ENCODE measurements at regions of chr12 and their contacts with region 1.

Region 1: DNA sequence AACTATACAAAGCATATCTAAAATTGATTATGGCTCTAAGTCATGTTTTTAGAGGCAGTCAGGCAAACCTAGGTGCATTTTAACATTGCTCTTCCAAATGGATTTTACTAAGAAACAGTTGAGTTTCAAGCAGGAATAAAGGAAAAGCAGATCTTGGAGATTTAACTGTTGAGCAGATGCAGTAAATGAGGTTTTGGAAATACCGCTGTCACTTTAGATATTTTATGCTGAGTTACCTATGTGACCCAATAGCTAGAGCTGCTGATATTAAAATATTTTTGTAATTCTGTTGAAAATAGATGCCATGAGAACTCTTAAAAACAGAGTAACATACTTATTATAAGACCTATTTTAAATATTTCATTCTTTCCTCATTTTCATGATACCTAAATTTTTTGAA is 181.4 kb downstream of the SYT1 start:
- DNase-seq: no peak
- ATAC-seq: no peak
- H3K4me3 ChIP-seq: no peak overlapping the region
- H3K27ac ChIP-seq: no peak overlapping the region
- H3K4me1 ChIP-seq: no peaks in the 10 kb centered on the region
- H3K27me3 ChIP-seq: no peaks in the 10 kb centered on the region
- CTCF ChIP-seq: no peak
- EP300 ChIP-seq: no peak
- POLR2A ChIP-seq: no peak
- RAD21 ChIP-seq: no peak

Region 2: GRCh38 chr12:79083181-79083580 is 37.2 kb after region 1 on chr12:
- CTCF ChIA-PET with region 1: no interaction called
- POLR2A ChIA-PET with region 1: no interaction called
- in situ Hi-C with region 1: no loop called
- intact Hi-C with region 1: loop called (anchors 2 kb)
- DNase-seq: peak in 1 of 4 experiments; percentile 1
- ATAC-seq: no peak
- H3K4me3 ChIP-seq: no peak overlapping the region
- H3K27ac ChIP-seq: no peak overlapping the region
- H3K4me1 ChIP-seq: no peaks in the 10 kb centered on the region
- H3K27me3 ChIP-seq: no peaks in the 10 kb centered on the region
- CTCF ChIP-seq: no peak
- EP300 ChIP-seq: no peak
- POLR2A ChIP-seq: no peak
- RAD21 ChIP-seq: no peak

Region 3: GRCh38 chr12:79238246-79238645 is 192.2 kb after region 1 on chr12:
- CTCF ChIA-PET with region 1: no interaction called
- POLR2A ChIA-PET with region 1: no interaction called
- in situ Hi-C with region 1: no loop called
- intact Hi-C with region 1: no loop called
- DNase-seq: no peak
- ATAC-seq: no peak
- H3K4me3 ChIP-seq: no peak overlapping the region
- H3K27ac ChIP-seq: no peak overlapping the region
- H3K4me1 ChIP-seq: no peaks in the 10 kb centered on the region
- H3K27me3 ChIP-seq: no peaks in the 10 kb centered on the region
- CTCF ChIP-seq: no peak
- EP300 ChIP-seq: no peak
- POLR2A ChIP-seq: no peak
- RAD21 ChIP-seq: no peak

Region 4: DNA sequence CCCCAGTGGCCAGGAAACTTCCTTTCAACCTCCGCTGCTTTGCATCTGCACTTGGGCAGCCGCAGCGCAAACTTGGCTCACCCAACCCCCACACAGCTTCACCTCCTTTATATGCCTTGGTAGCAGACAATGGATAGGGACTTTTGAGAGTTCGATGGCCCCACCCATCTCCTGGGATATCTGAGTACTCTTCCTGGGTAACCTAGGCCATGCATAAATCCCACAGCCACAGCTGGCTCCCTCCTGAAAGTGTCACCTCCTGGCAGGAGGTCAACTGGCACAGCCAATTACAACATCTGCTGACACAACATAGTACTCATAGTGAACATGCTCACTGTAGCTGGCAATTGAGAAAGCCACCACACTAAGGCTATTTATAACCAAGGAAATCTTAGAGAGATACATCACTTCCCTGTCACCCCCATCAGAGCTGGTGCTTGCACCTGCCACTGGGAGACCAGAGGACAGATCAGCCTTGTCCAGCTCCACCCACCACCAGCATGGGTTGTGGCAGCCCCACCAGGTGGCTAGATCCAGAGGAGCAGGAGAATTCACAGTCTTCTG is 228.6 kb after region 1 on chr12:
- CTCF ChIA-PET with region 1: no interaction called
- POLR2A ChIA-PET with region 1: no interaction called
- in situ Hi-C with region 1: no loop called
- intact Hi-C with region 1: no loop called
- DNase-seq: no peak
- ATAC-seq: no peak
- H3K4me3 ChIP-seq: no peak overlapping the region
- H3K27ac ChIP-seq: no peak overlapping the region
- H3K4me1 ChIP-seq: no peaks in the 10 kb centered on the region
- H3K27me3 ChIP-seq: no peaks in the 10 kb centered on the region
- CTCF ChIP-seq: no peak
- EP300 ChIP-seq: no peak
- POLR2A ChIP-seq: no peak
- RAD21 ChIP-seq: no peak